Tibial artery (tissue), 4 donors: ENCODE measurements at regions of chr17 and their contacts with region 1.

Region 1: GRCh38 chr17:56715613-56716357 is 117.9 kb downstream of the C17orf67 start:
- DNase-seq: peak; percentile 79 to 84
- H3K4me3 ChIP-seq: no peak overlapping the region
- H3K27ac ChIP-seq: no peak overlapping the region
- H3K4me1 ChIP-seq: no peaks in the 10 kb centered on the region
- H3K27me3 ChIP-seq: peaks cover 0 to 5% of the 10 kb centered on the region in 2 donors
- CTCF ChIP-seq: peak; percentile 77 to 78

Region 2: GRCh38 chr17:56592487-56593085 is 123.2 kb before region 1 on chr17:
- intact Hi-C with region 1: loop called (anchors 2 kb)
- DNase-seq: peak; percentile 44 to 70
- H3K4me3 ChIP-seq: peak overlapping the region; percentile 48 to 62
- H3K27ac ChIP-seq: no peak overlapping the region
- H3K4me1 ChIP-seq: peaks cover 4 to 50% (median 42%) of the 10 kb centered on the region in 4 donors
- H3K27me3 ChIP-seq: peaks cover 0 to 47% of the 10 kb centered on the region in 2 donors
- CTCF ChIP-seq: peak; percentile 93 to 95